ENCODE measurements at regions of chr17 and their contacts with region 1.

Region 1: GRCh38 chr17:45976755-45977505 is 22.1 kb upstream of the STH start:
- DNase-seq: no peak
- H3K4me3 ChIP-seq: no peak overlapping the region
- CTCF ChIP-seq: no peak
- POLR2A ChIP-seq: no peak

Region 2: DNA sequence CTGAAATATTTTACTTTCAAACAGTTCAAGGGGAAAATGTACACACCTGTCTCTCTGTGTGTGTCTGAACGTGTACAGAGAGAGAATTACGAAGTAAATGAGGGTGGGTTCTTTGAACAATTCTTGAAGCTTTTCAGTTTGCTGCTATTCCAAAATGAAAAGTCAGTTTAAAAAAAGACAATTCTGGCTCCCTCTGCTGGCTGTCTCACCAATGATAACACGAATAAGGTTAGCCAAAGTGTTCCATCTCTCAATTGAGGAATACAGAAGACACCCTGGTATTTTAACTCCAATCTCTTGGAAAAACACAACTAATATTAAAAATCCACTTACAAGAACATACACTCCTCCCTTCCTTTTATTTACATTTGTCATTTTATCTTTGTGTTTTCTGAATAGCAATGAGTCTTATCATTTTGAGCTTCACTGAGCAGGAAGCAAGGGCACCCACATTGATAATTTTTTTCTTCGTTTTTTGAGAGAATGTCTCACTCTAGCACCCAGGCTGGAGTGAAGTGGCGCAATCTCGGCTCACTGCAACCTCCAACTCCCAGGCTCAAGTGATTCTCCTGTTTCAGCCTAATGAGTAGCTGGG is 1098.2 kb before region 1 on chr17:
- intact Hi-C with region 1: loop called (anchors 5 kb)
- DNase-seq: no peak
- H3K4me3 ChIP-seq: no peak overlapping the region
- CTCF ChIP-seq: no peak
- POLR2A ChIP-seq: no peak

Region 3: GRCh38 chr17:46078675-46079074 is 101.7 kb after region 1 on chr17:
- intact Hi-C with region 1: no loop called
- DNase-seq: no peak
- H3K4me3 ChIP-seq: no peak overlapping the region
- CTCF ChIP-seq: no peak
- POLR2A ChIP-seq: no peak